Left cardiac atrium (tissue), 4 donors: ENCODE measurements at regions of chr3 and their contacts with region 1.

Region 1: GRCh38 chr3:107846279-107846852 is 244.5 kb downstream of the CD47 start:
- DNase-seq: peak; percentile 65
- ATAC-seq: peak; percentile 86 to 92

Region 2: DNA sequence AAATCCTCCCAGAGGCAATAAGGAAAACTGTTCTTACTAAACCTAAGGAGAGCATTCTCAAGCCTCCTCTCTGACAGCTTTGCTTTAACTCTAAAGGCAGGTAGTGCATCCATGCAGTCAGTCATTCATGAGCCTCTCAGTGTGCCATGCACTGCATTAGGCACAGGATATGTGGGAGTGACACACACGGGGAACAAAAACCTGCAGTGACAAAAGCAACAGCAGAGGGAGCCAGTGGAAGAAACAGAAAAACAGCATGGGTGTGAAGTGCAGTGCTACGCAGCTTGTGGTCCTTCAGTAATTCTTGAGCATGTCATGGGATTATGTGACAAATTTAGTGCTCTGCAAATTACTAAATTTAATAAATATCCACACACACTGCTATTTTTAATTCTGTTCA is 92.9 kb before region 1 on chr3:
- intact Hi-C with region 1: loop called in 1 of 2 experiments (anchors 10 kb)
- DNase-seq: no peak
- ATAC-seq: peak; percentile 59 to 60